Mammary epithelial cell (primary cell): ENCODE measurements at regions of chr9 and their contacts with region 1.

Region 1: DNA sequence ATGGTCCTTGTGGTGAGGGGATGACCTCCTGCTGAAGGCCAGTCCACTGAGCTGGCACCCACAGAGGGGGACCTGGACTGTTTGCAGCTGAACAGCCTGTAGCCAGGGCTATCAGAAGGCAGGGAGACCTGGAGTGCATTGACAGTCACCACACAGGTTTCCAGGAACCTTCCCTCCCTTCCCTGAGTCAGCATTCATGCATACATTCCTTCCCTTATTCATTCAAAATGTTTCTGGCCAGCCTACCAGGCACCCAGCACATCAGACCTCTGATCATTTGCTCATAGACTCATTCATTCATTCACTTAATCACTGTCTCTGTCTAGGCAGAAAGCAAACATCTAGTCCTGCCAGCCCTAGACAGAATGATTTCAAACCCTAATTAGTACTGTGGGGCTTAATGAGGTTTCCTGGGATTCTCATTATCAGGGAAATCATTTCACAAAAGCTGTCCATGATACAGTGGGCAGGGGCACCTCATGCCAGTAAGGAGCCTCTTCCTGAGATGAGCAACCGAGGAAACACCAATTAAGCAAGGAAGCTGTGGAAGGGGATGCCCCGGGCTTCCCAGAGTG is 110.1 kb upstream of the PPP1R26 start:
- DNase-seq: peak; percentile 58
- H3K4me3 ChIP-seq: no peak overlapping the region
- H3K27ac ChIP-seq: no peak overlapping the region
- H3K4me1 ChIP-seq: peaks cover 20% of the 10 kb centered on the region
- H3K27me3 ChIP-seq: no peaks in the 10 kb centered on the region
- CTCF ChIP-seq: no peak

Region 2: DNA sequence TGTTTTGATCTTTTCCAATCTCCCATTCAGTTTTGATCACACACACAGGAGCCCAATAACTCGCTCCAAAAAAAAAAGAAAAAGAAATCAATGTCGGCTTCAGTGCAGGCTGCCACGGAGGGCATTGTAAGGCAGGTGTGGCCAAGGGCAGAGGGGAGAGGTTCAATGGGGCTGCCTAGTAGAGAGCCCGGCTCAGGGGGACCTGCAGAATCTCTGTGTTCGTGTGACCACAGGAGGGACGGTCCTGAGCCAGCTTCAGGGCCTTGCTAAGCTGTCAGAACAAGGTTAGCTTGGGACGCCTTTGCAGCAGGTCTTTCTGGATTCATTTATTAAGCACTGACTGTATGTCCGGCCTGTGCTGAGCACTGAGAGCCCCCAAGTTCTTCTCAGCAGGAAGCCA is 259.9 kb before region 1 on chr9:
- CTCF ChIA-PET with region 1: no interaction called
- dilution Hi-C with region 1: loop called (anchors 5 kb)
- in situ Hi-C with region 1: no loop called
- intact Hi-C with region 1: no loop called
- DNase-seq: no peak
- H3K4me3 ChIP-seq: no peak overlapping the region
- H3K27ac ChIP-seq: no peak overlapping the region
- H3K4me1 ChIP-seq: no peaks in the 10 kb centered on the region
- H3K27me3 ChIP-seq: no peaks in the 10 kb centered on the region
- CTCF ChIP-seq: no peak

Region 3: DNA sequence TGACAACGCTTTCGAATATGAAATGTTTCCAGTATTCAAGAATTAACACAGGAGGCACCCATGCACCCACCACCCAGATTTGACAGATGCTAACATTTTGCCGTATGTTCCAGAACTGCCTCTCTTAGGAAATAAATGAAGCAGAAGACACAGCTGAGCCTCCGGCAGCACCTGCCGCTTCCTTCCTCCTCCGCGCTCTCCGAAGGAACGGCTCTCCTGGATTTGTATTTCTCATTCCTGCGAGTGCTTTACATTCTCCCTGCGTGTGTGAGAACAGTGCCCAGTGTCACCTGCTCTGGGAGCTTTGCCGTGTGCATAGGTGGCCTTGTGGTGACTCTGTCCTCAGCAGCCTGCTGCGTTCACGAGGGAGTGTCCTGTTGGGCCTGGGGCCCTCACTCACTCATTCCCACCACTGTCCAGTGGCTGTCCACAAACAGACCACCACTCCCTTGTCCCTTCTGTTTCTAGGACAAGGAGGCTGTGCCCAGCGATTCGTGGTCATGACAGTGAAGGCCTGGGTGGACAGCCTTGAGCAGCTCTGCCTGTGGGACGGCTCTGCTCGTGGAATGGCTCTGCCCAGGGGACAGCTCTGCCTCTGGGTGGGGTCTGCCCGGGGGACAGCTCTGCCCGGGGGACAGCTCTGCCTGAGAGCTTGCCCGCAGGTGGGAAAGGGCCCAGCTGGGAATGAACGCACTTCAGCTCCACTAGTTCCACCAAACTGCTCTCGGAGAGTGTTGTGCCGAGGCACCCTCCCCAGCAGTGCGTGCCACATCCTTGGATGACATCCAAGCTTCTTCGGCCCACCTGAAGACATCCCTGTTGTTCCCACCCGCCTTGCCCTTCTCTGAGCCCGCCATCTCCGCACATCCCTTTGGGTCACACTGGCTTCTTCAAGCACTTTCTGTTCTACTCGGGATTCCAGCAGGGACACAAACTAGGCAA is 60.4 kb before region 1 on chr9:
- CTCF ChIA-PET with region 1: no interaction called
- dilution Hi-C with region 1: loop called (anchors 5 kb)
- in situ Hi-C with region 1: no loop called
- intact Hi-C with region 1: no loop called
- DNase-seq: no peak
- H3K4me3 ChIP-seq: no peak overlapping the region
- H3K27ac ChIP-seq: no peak overlapping the region
- H3K4me1 ChIP-seq: no peaks in the 10 kb centered on the region
- H3K27me3 ChIP-seq: no peaks in the 10 kb centered on the region
- CTCF ChIP-seq: no peak

Region 4: GRCh38 chr9:135355521-135356011 is 13.9 kb before region 1 on chr9:
- CTCF ChIA-PET with region 1: no interaction called
- dilution Hi-C with region 1: no loop called
- in situ Hi-C with region 1: no loop called
- intact Hi-C with region 1: loop called (anchors 2 kb)
- DNase-seq: no peak
- H3K4me3 ChIP-seq: no peak overlapping the region
- H3K27ac ChIP-seq: no peak overlapping the region
- H3K4me1 ChIP-seq: no peaks in the 10 kb centered on the region
- H3K27me3 ChIP-seq: no peaks in the 10 kb centered on the region
- CTCF ChIP-seq: no peak